ENCODE measurements at regions of chr19 and their contacts with region 1.

Region 1: GRCh38 chr19:3665681-3666544 is 34.4 kb downstream of the PIP5K1C start:
- DNase-seq: peak; percentile 12
- ATAC-seq: peak; percentile 80
- H3K4me3 ChIP-seq: no peak overlapping the region
- H3K27ac ChIP-seq: no peak overlapping the region
- H3K4me1 ChIP-seq: peaks cover 7% of the 10 kb centered on the region; the same call in 1 of the 2 replicates
- H3K27me3 ChIP-seq: no peaks in the 10 kb centered on the region
- CTCF ChIP-seq: peak; percentile 92

Region 2: GRCh38 chr19:3708208-3708931 is 42.5 kb after region 1 on chr19 and contains the start of gene TJP3:
- CTCF ChIA-PET with region 1: no interaction called
- POLR2A ChIA-PET with region 1: no interaction called
- in situ Hi-C with region 1: no loop called
- intact Hi-C with region 1: loop called (anchors 5 kb)
- DNase-seq: no peak
- ATAC-seq: peak; percentile 44; the same call in 1 of the 2 replicates
- H3K4me3 ChIP-seq: 0 out of 4 replicates have a peak within 1 kb of the TSS, but pooled peaks of 1 of the 2 experiments have one; percentile 3
- H3K27ac ChIP-seq: no peak within 1 kb of the TSS
- H3K4me1 ChIP-seq: peaks cover 14% of the 10 kb centered on the region
- H3K27me3 ChIP-seq: no peaks in the 10 kb centered on the region
- CTCF ChIP-seq: no peak
- total RNA-seq, gene TJP3: 2.7 TPM